Activated T-helper 1 cell treated with anti-CD3 and anti-CD28 coated beads, Interleukin-12 subunit alpha, Interleukin-12 subunit beta, Interleukin-2, Interleukin-4 antibody, amounts not matched to agents 30 ng/mL and 10 ng/mL and 1 ng/mL, durations not matched to agents 14 hours and 24 hours and 36 hours (primary cell): ENCODE measurements at regions of chr3 and their contacts with region 1.

Region 1: DNA sequence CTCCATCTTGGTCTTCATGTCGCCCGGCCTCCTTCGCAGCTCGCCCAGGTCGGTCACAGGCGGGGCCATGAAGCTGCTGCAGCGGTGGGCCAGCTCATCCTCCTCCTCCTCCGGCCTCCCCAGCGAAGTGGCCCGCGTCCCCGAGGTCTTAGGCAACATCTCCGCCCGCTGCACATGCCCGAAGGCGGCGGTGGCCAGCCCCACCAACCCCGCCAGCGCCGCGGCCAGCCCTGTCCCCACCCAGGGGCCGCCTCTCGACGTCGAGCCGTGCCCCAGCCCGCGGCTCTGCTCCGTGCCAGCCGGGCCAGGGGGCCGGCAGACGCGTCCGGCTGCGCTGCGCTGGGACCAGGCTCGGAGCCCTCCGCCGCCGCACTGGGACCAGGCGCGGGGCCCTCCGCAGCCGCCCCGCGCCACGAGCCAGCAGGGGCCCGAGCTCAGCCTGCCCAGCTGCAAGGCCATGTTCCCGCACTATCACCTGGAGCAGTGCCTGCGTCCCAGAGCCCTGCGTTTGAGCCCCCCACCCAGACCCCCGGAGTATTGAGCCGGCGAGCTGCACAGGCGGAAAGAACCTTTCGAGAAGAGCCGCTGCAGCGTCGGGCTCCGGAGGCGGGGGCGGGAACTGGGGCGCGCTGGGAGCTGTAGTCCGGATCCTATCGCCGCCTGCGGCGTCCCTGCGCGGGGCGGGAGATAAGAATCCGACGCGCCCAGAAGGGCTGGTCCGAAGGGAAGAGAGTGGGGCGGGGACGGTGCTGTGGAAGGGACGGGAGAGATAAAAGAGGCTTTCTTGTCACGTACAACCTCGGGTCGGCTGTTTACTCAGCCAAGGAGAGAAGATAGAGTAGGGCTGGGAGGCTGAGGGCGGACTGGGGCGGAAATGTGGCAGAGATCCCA is at the start of gene CPOX:
- DNase-seq: peak; percentile 84
- H3K4me3 Mint-ChIP-seq: peak within 1 kb of the TSS; percentile 95
- H3K27ac Mint-ChIP-seq: peak within 1 kb of the TSS; percentile 95
- H3K4me1 Mint-ChIP-seq: peaks cover 63% of the 10 kb centered on the region
- H3K27me3 Mint-ChIP-seq: no peaks in the 10 kb centered on the region
- total RNA-seq, gene CPOX: 42.2 and 47.4 TPM in 2 replicates

Region 2: DNA sequence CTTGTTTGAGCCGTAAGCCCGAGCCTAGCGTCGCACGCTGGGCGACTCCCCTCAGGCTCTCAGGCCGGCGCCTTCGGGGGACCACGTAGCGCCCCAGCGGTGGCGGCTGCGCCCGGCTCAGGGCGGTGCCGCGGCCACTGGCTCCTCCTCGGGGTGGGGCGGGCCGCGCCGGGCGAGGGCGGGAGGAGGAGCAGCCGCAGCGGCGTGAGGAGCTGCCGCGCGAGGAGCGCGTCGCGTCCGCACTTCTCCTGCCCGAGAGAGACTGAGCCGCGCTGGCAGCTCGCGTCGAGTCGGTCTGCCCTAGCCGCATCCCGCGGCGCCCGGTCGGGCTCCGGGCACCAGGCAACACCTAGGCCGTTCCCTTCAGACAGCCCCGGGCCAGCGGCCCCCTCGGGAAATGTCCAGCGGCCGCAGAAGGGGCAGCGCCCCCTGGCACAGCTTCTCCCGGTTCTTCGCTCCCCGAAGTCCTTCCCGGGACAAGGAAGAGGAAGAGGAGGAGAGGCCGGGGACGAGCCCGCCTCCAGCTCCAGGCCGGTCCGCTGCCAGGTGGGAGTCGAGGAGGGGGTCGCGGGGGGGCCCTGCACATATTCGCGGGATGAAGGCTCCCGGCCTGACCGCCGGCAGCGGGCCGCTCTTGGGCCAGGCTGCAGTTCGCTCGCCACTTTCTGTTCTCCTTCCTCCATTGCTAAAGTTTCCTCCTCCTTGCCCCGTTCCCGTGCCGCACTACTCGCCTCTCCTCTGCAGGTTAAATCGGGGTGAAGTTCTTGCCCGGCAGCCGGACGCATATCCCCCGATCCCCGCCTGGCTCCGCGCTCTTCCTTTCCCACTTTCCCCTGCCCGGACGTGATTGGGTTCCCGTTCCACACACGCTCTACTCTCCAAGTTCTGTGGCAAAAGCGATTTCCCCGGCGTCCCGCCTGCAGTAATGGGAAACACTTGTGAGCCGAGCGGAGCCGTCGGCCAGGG is 771.2 kb before region 1 on chr3 and contains the start of gene CRYBG3:
- intact Hi-C with region 1: loop called (anchors 1 kb)
- DNase-seq: peak; percentile 86
- H3K4me3 Mint-ChIP-seq: peak within 1 kb of the TSS; percentile 99
- H3K27ac Mint-ChIP-seq: peak within 1 kb of the TSS; percentile 92
- H3K4me1 Mint-ChIP-seq: peaks cover 40% of the 10 kb centered on the region
- H3K27me3 Mint-ChIP-seq: peaks cover 34% of the 10 kb centered on the region
- total RNA-seq, gene CRYBG3: 6.5 and 6.8 TPM in 2 replicates

Region 3: DNA sequence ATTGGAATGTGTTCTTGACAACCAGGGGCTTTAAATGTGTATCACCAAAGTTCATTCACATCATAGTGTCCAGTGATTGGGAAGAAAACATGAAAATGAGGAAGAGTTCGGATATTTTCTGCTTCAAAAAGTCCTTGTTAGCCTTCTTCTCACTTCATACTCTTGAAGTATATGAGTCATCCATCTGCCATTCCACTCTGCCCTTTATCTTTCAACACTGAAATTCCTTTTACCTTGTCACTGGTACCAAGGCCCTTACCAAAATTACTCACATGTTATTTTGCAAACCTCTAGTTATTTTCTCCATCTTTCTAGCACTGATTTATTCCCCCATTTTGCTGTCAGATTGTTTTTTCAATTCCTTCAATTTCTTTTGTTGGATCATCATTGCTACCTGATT is 394.3 kb before region 1 on chr3:
- intact Hi-C with region 1: no loop called
- DNase-seq: no peak
- H3K4me3 Mint-ChIP-seq: no peak overlapping the region
- H3K27ac Mint-ChIP-seq: no peak overlapping the region
- H3K4me1 Mint-ChIP-seq: no peaks in the 10 kb centered on the region
- H3K27me3 Mint-ChIP-seq: peaks cover 5% of the 10 kb centered on the region

Region 4: DNA sequence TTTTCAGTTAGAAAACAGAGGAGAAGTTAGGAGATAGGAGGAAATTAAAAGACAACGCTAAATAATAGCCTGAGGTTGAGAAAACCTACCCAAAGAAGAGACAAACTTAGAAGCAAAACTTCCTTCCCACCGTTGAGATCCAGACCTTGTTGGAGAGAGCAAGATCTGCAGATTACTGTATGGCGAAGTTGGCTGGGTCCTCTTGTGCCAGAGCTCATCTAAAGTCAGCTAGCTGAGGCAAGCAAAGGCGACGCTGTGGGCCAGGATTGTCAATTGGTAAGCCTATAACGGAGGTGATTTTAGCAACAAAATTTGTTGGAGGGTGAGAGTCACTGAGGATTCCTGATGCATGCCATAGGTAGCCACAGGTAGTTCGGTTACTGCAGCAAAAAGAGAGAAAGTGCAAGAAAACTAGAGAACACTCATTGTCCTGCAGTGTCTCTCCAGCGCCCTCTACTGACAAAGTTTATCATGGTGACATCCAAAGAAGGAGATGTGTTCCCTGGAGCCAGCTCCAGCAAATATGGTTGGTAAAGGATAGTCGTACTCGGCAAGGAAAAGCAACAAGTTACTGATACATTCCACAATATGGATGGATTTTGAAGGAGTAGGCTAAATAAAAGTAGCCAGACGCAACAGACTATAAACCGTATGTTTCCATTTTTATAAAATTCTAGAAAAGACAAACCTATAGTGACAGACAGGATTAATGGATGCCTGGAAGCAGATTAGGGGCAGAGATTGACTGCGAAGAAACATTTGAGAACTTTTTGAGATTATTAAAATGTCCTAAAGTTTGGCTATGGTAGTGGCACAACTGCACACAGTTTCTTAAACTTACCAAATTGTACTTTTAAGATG is 249.4 kb before region 1 on chr3:
- intact Hi-C with region 1: loop called (anchors 5 kb)
- DNase-seq: no peak
- H3K4me3 Mint-ChIP-seq: no peak overlapping the region
- H3K27ac Mint-ChIP-seq: no peak overlapping the region
- H3K4me1 Mint-ChIP-seq: peaks cover 6% of the 10 kb centered on the region
- H3K27me3 Mint-ChIP-seq: peaks cover 53% of the 10 kb centered on the region

Region 5: GRCh38 chr3:98500039-98500438 is 93.3 kb before region 1 on chr3:
- intact Hi-C with region 1: no loop called
- DNase-seq: no peak
- H3K4me3 Mint-ChIP-seq: no peak overlapping the region
- H3K27ac Mint-ChIP-seq: no peak overlapping the region
- H3K4me1 Mint-ChIP-seq: no peaks in the 10 kb centered on the region
- H3K27me3 Mint-ChIP-seq: peaks cover 1% of the 10 kb centered on the region

Region 6: GRCh38 chr3:98573181-98573728 is 20.0 kb before region 1 on chr3:
- intact Hi-C with region 1: loop called (anchors 1 kb)
- DNase-seq: no peak
- H3K4me3 Mint-ChIP-seq: peak overlapping the region; percentile 46
- H3K27ac Mint-ChIP-seq: peak overlapping the region; percentile 61
- H3K4me1 Mint-ChIP-seq: peaks cover 64% of the 10 kb centered on the region
- H3K27me3 Mint-ChIP-seq: no peaks in the 10 kb centered on the region

Region 7: DNA sequence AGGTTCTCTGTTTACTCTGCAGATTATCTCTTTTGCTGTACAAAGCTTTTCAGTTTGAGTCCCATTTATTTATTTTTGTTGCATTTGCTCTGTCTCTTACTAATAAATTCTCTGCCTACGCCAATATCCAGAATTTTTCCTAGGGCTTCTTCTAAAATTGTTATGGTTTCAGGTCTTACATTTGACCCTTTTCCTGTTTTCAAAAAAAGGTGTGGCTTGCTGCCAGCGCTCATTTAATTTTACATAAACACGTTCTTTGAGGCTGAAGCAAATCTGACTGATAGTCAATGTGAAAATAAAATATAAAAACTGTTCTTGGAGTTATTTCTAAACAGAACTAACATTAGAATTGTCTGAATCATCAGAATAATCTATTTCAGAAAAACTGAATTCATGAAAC is 276.1 kb after region 1 on chr3:
- intact Hi-C with region 1: no loop called
- DNase-seq: no peak
- H3K4me3 Mint-ChIP-seq: no peak overlapping the region
- H3K27ac Mint-ChIP-seq: no peak overlapping the region
- H3K4me1 Mint-ChIP-seq: no peaks in the 10 kb centered on the region
- H3K27me3 Mint-ChIP-seq: no peaks in the 10 kb centered on the region

Region 8: GRCh38 chr3:98901392-98902350 is 308.4 kb after region 1 on chr3 and contains the start of gene DCBLD2:
- intact Hi-C with region 1: loop called (anchors 1 kb)
- DNase-seq: peak; percentile 94
- H3K4me3 Mint-ChIP-seq: peak within 1 kb of the TSS; percentile 84
- H3K27ac Mint-ChIP-seq: peak within 1 kb of the TSS; percentile 51
- H3K4me1 Mint-ChIP-seq: peaks cover 12% of the 10 kb centered on the region
- H3K27me3 Mint-ChIP-seq: peaks cover 33% of the 10 kb centered on the region
- total RNA-seq, gene DCBLD2: 1.5 and 2.3 TPM in 2 replicates